Activated CD4-positive, alpha-beta memory T cell treated with anti-CD3 and anti-CD28 coated beads, Interleukin-2, amount 10 ng/mL, durations not matched to agents 7 days and 5 days (primary cell): ENCODE measurements at regions of chr14 and their contacts with region 1.

Region 1: GRCh38 chr14:24339284-24340151 is at the start of gene RIPK3:
- DNase-seq: peak; percentile 82
- H3K4me3 Mint-ChIP-seq: peak within 1 kb of the TSS; percentile 97
- H3K27ac Mint-ChIP-seq: peak within 1 kb of the TSS; percentile 83
- H3K4me1 Mint-ChIP-seq: peaks cover 42% of the 10 kb centered on the region
- H3K27me3 Mint-ChIP-seq: peaks cover 31% of the 10 kb centered on the region
- total RNA-seq, gene RIPK3: 37.3 to 38.0 TPM

Region 2: GRCh38 chr14:24036169-24036962 is 303.2 kb before region 1 on chr14:
- CTCF ChIA-PET with region 1: no interaction called
- POLR2A ChIA-PET with region 1: no interaction called
- DNase-seq: peak; percentile 72
- H3K4me3 Mint-ChIP-seq: peak overlapping the region; percentile 97
- H3K27ac Mint-ChIP-seq: peak overlapping the region; percentile 80
- H3K4me1 Mint-ChIP-seq: peaks cover 14% of the 10 kb centered on the region
- H3K27me3 Mint-ChIP-seq: no peaks in the 10 kb centered on the region

Region 3: GRCh38 chr14:24425704-24426103 is 86.2 kb after region 1 on chr14:
- CTCF ChIA-PET with region 1: interaction called, 494 read pairs
- POLR2A ChIA-PET with region 1: interaction called, 221 read pairs
- DNase-seq: no peak
- H3K4me3 Mint-ChIP-seq: peak overlapping the region; percentile 0
- H3K27ac Mint-ChIP-seq: peak overlapping the region; percentile 88
- H3K4me1 Mint-ChIP-seq: peaks cover 47% of the 10 kb centered on the region
- H3K27me3 Mint-ChIP-seq: no peaks in the 10 kb centered on the region

Region 4: GRCh38 chr14:24442273-24443052 is 102.9 kb after region 1 on chr14 and contains the start of gene SDR39U1:
- CTCF ChIA-PET with region 1: interaction called, 169 read pairs
- POLR2A ChIA-PET with region 1: interaction called, 221 read pairs
- DNase-seq: peak; percentile 98
- H3K4me3 Mint-ChIP-seq: peak within 1 kb of the TSS; percentile 92
- H3K27ac Mint-ChIP-seq: peak within 1 kb of the TSS; percentile 97
- H3K4me1 Mint-ChIP-seq: peaks cover 52% of the 10 kb centered on the region
- H3K27me3 Mint-ChIP-seq: no peaks in the 10 kb centered on the region
- total RNA-seq, gene SDR39U1: 38.5 to 41.6 TPM